OCI-LY7 (cell line): ENCODE measurements at regions of chr3 and their contacts with region 1.

Region 1: GRCh38 chr3:128584412-128585020 is 66.1 kb downstream of the RPN1 start:
- DNase-seq: peak; percentile 38
- H3K4me3 ChIP-seq: no peak overlapping the region
- H3K27ac ChIP-seq: no peak overlapping the region
- H3K4me1 ChIP-seq: no peaks in the 10 kb centered on the region
- CTCF ChIP-seq: peak; percentile 64

Region 2: GRCh38 chr3:128515967-128516366 is 68.5 kb before region 1 on chr3:
- CTCF ChIA-PET with region 1: no interaction called
- POLR2A ChIA-PET with region 1: no interaction called
- intact Hi-C with region 1: loop called (anchors 5 kb)
- DNase-seq: no peak
- H3K4me3 ChIP-seq: no peak overlapping the region
- H3K27ac ChIP-seq: no peak overlapping the region
- H3K4me1 ChIP-seq: no peaks in the 10 kb centered on the region
- CTCF ChIP-seq: no peak